ENCODE measurements at regions of chr12 and their contacts with region 1.

Region 1: DNA sequence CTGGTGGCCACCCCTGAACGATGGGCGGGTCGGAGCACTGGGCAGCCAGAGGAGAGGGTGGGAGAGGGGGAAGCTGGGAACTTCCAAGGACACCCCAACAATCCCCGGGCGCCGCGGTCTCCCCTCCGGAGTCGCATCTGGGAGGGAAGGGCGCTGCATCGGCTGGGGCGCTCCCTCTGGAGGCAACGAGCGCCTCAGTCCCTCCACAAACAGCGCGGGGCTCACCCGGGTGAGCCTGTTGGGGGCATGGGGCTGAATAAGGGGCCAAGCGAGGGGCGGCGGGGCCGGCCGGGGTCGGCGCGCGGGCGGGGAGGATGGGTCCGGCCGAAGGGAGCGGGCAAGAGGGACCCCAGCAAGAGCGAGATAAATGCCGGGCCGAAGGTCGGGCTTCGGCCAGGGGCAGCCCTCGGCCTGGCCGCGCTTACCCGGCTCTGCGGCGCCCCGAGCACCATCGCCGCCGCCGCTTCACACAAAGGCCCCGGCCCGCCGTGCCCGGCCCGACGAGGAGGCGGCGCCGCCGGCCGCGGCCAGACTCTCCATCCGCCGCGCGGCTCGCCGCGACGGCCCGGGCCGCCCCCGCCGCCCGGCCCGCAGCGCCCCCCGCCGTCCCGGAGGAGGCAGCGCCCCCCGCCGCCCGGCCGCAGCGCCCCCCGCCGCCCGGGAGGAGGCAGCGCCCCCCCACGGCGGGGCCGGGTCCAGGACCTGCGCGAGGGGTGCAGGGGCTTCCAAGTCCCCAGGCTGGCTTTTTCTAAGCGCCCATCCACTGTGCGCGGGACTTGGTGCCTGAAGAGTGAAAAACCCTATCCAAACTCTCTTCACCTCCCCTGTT is at the start of gene ZBTB39:
- DNase-seq: peak; percentile 64
- H3K4me3 Mint-ChIP-seq: peak within 1 kb of the TSS; percentile 90
- H3K27ac Mint-ChIP-seq: peak within 1 kb of the TSS; percentile 79
- H3K4me1 Mint-ChIP-seq: peaks cover 62% of the 10 kb centered on the region
- H3K27me3 Mint-ChIP-seq: no peaks in the 10 kb centered on the region

Region 2: DNA sequence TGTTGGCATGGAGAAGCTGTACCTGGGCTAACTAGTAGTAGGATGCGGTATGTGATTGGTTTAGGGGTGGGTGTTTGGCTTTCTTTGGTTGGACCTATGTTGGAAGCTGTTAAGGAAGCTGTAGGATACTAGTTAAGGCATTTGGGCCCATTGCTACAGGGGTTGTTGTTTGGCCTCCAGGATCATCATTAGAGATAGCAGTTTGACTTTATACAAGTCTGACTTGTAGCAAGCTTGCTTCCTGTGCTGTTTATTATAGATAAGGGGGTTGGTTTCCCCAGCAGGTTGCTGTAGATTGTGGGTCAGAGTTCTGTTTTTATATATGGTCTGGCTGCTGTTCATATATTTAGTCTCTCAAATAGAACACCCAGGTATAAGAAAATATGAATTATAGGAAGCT is 252.6 kb before region 1 on chr12:
- CTCF ChIA-PET with region 1: interaction called, 57 read pairs
- DNase-seq: no peak
- H3K4me3 Mint-ChIP-seq: peak overlapping the region; percentile 41
- H3K27ac Mint-ChIP-seq: peak overlapping the region; percentile 3
- H3K4me1 Mint-ChIP-seq: peaks cover 45% of the 10 kb centered on the region
- H3K27me3 Mint-ChIP-seq: no peaks in the 10 kb centered on the region

Region 3: GRCh38 chr12:56766535-56766934 is 239.7 kb before region 1 on chr12:
- CTCF ChIA-PET with region 1: interaction called, 39 read pairs
- DNase-seq: no peak
- H3K4me3 Mint-ChIP-seq: no peak overlapping the region
- H3K27ac Mint-ChIP-seq: no peak overlapping the region
- H3K4me1 Mint-ChIP-seq: no peaks in the 10 kb centered on the region
- H3K27me3 Mint-ChIP-seq: no peaks in the 10 kb centered on the region

Region 4: DNA sequence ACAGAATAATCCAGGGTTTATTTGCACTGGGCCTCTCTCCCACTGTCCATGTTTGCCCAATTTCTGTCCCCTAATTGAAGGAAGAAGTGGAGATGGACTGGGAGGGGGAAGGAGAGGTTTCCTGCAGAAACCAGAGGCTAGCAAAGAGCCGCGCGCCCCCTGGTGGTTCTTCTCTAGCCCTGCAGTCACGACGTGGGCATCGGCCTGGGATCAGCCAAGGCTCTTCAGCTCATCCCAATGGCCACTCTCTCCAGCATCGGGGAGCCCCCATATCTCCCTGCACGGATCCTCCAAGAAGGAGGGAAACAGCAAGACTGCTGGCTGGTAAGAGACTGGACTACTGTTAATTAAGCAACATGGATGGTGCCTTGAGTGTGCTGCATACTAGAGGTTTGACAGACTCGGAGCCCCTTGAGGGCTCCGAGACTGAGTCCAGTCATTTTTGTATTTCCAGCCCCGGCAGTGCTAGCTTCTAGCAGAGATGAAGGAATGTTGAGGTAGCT is 18.6 kb before region 1 on chr12:
- CTCF ChIA-PET with region 1: interaction called, 28 read pairs
- DNase-seq: peak; percentile 81
- H3K4me3 Mint-ChIP-seq: no peak overlapping the region
- H3K27ac Mint-ChIP-seq: no peak overlapping the region
- H3K4me1 Mint-ChIP-seq: peaks cover 15% of the 10 kb centered on the region
- H3K27me3 Mint-ChIP-seq: peaks cover 24% of the 10 kb centered on the region

Region 5: GRCh38 chr12:57063991-57064685 is 57.9 kb after region 1 on chr12:
- CTCF ChIA-PET with region 1: interaction called, 147 read pairs
- DNase-seq: peak; percentile 72
- H3K4me3 Mint-ChIP-seq: peak overlapping the region; percentile 67
- H3K27ac Mint-ChIP-seq: peak overlapping the region; percentile 97
- H3K4me1 Mint-ChIP-seq: peaks cover 39% of the 10 kb centered on the region
- H3K27me3 Mint-ChIP-seq: no peaks in the 10 kb centered on the region

Region 6: DNA sequence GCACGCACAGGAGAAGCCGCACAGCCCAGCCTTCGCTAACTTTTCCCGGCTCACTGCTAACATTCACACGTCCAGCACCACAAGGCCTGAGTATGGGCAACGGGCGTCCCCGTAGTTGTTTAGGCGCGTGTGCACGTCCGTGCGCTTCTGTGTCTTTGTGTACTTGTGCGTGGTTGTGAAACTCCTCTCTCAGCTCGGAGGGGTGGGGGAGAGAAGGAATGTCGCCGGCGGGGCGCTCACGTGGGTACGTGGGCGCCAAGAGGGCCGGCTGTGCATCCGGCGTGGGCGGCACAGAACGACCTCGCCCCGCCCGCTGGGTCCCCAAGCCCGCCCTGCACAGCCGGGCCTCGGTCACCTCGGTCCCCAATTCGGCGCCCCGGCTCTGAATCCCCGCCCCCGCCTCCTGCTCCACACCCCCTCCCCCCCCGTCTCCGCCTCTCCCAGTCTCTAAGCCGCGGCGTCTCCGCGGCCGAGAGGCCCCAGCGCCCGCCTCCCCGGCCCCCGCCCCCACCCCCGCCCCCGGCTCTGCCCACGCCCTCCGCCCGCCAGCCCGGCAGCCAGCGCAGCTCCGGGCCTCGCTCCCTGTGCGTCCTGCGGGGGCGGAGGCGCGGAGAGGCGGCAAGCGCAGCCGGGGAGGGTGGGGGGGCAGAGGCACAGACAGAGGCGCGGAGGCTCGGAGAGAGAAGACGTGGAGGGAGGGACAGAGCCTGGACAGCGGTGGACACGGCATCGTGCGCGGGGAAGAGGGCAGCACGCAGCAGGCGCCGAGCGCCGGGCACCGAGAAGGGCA is 82.5 kb after region 1 on chr12 and contains the start of gene NAB2:
- CTCF ChIA-PET with region 1: interaction called, 18 read pairs
- DNase-seq: peak; percentile 97
- H3K4me3 Mint-ChIP-seq: peak within 1 kb of the TSS; percentile 88
- H3K27ac Mint-ChIP-seq: peak within 1 kb of the TSS; percentile 94
- H3K4me1 Mint-ChIP-seq: peaks cover 67% of the 10 kb centered on the region
- H3K27me3 Mint-ChIP-seq: no peaks in the 10 kb centered on the region